Caco-2 (cell line): ENCODE measurements at regions of chr15 and their contacts with region 1.

Region 1: GRCh38 chr15:43800286-43801141 is at the start of gene HYPK:
- DNase-seq: peak; percentile 86 to 90
- H3K4me3 ChIP-seq: peak within 1 kb of the TSS; percentile 86
- H3K4me3 Mint-ChIP-seq: peak within 1 kb of the TSS; percentile 98
- H3K27ac Mint-ChIP-seq: peak within 1 kb of the TSS; percentile 99
- H3K4me1 ChIP-seq: peaks cover 13% of the 10 kb centered on the region
- H3K4me1 Mint-ChIP-seq: peaks cover 23% of the 10 kb centered on the region
- H3K27me3 ChIP-seq: no peaks in the 10 kb centered on the region
- H3K27me3 Mint-ChIP-seq: no peaks in the 10 kb centered on the region
- CTCF ChIP-seq: no peak
- total RNA-seq, gene HYPK: 17.9 and 20.4 TPM in 2 replicates

Region 2: GRCh38 chr15:43268111-43269105 is 532.1 kb before region 1 on chr15:
- CTCF ChIA-PET with region 1: no interaction called
- POLR2A ChIA-PET with region 1: no interaction called
- intact Hi-C with region 1: no loop called
- DNase-seq: peak in 1 of 2 experiments; percentile 19
- H3K4me3 ChIP-seq: no peak overlapping the region
- H3K4me3 Mint-ChIP-seq: no peak overlapping the region
- H3K27ac Mint-ChIP-seq: no peak overlapping the region
- H3K4me1 ChIP-seq: no peaks in the 10 kb centered on the region
- H3K4me1 Mint-ChIP-seq: no peaks in the 10 kb centered on the region
- H3K27me3 ChIP-seq: no peaks in the 10 kb centered on the region; the same call in 1 of the 2 replicates
- H3K27me3 Mint-ChIP-seq: peaks cover 19% of the 10 kb centered on the region
- CTCF ChIP-seq: peak in 1 of 2 experiments; percentile 35

Region 3: GRCh38 chr15:43824302-43825246 is 24.1 kb after region 1 on chr15 and contains the start of gene MFAP1:
- CTCF ChIA-PET with region 1: no interaction called
- POLR2A ChIA-PET with region 1: interaction called, 9 read pairs
- intact Hi-C with region 1: loop called (anchors 2 kb)
- DNase-seq: peak; percentile 92 to 96
- H3K4me3 ChIP-seq: peak within 1 kb of the TSS; percentile 79
- H3K4me3 Mint-ChIP-seq: peak within 1 kb of the TSS; percentile 95
- H3K27ac Mint-ChIP-seq: peak within 1 kb of the TSS; percentile 92
- H3K4me1 ChIP-seq: 0 out of 2 replicates have a peak, but pooled peaks cover 6% of the 10 kb centered on the region
- H3K4me1 Mint-ChIP-seq: peaks cover 21% of the 10 kb centered on the region
- H3K27me3 ChIP-seq: no peaks in the 10 kb centered on the region
- H3K27me3 Mint-ChIP-seq: no peaks in the 10 kb centered on the region
- CTCF ChIP-seq: no peak
- total RNA-seq, gene MFAP1: 37.1 and 37.4 TPM in 2 replicates

Region 4: DNA sequence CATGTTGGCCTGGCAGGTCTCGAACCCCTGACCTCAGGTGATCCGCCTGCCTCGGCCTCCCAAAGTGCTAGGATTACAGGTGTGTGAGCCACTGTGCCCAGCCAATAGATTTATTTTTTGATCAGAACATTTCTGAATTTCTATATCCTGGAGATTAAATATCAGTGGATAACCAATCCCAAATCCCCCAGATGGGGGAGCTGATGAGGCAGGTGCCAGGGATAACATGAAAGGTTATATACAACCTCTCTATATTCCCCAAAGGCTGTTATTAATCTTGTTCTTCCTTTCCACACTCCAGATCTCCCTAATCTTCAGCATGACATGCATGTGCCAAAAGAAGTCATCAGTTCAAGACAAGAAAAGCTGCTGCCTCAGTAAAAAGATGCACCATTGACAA is 138.6 kb after region 1 on chr15:
- CTCF ChIA-PET with region 1: no interaction called
- POLR2A ChIA-PET with region 1: no interaction called
- intact Hi-C with region 1: no loop called
- DNase-seq: peak in 1 of 2 experiments; percentile 44
- H3K4me3 ChIP-seq: no peak overlapping the region
- H3K4me3 Mint-ChIP-seq: no peak overlapping the region
- H3K27ac Mint-ChIP-seq: no peak overlapping the region
- H3K4me1 ChIP-seq: no peaks in the 10 kb centered on the region
- H3K4me1 Mint-ChIP-seq: no peaks in the 10 kb centered on the region
- H3K27me3 ChIP-seq: no peaks in the 10 kb centered on the region
- H3K27me3 Mint-ChIP-seq: no peaks in the 10 kb centered on the region
- CTCF ChIP-seq: peak; percentile 37 to 41

Region 5: DNA sequence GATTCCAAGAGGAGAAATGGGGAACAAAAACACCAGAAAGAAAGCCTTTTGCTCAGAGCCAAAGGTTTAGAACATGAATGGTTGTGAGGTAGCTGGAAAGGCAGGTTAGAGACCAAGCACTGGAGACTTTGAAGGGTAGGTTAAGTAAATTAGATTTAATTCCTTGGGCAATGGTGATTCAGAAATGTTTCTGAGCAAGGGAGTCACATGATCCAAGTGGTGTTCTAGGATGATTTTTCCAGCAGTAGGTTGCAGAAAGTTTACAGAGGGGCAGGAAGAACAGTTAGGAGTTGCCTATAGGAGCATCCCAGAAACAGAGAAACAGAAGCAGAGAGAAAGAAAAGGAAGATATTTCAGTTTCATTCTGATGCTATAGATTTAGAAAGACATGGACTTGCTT is 166.1 kb after region 1 on chr15:
- CTCF ChIA-PET with region 1: no interaction called
- POLR2A ChIA-PET with region 1: no interaction called
- intact Hi-C with region 1: no loop called
- DNase-seq: no peak
- H3K4me3 ChIP-seq: no peak overlapping the region
- H3K4me3 Mint-ChIP-seq: no peak overlapping the region
- H3K27ac Mint-ChIP-seq: no peak overlapping the region
- H3K4me1 ChIP-seq: no peaks in the 10 kb centered on the region
- H3K4me1 Mint-ChIP-seq: no peaks in the 10 kb centered on the region
- H3K27me3 ChIP-seq: no peaks in the 10 kb centered on the region
- H3K27me3 Mint-ChIP-seq: no peaks in the 10 kb centered on the region
- CTCF ChIP-seq: no peak